AG04449 (cell line): ENCODE measurements at regions of chr1 and their contacts with region 1.

Region 1: GRCh38 chr1:19361611-19362147 is 49.6 kb downstream of the SLC66A1 start:
- DNase-seq: no peak
- H3K4me3 ChIP-seq: no peak overlapping the region
- CTCF ChIP-seq: no peak

Region 2: DNA sequence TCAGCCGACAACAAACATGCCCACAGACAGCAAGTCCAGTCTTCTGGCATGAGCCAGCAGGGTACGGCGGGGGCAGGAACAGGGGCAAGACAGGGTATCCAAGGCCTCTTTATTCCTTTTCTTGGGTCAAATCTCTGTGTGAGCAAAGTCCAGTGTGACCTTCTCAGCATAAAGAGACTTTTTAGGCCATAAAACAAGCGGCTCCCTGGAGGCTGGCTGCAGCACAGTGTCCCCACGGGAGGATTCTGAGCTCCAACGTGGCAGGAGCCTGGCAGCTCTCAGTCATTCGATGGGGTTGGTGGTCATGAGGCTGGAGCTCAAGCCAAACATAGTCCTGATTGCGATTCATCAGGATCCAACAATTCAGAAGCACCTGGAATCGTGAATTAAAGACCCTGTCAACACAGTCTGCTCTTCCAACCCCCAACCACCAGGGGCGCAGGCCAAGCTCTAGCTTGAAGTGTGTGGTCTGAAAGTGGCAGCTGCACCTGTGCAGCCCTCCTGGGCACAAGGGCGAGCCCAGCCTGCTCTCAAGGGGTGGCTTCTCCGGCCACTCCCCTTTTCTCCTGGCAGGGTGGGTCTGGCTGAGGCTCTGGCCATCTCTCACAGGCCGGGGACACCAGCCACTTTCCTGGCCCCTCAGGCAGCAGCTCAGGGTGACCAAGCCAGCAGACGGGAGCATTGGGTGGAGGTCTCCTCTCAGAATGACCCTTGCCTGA is 12.6 kb after region 1 on chr1:
- CTCF ChIA-PET with region 1: interaction called, 22 read pairs
- POLR2A ChIA-PET with region 1: no interaction called
- DNase-seq: no peak
- H3K4me3 ChIP-seq: no peak overlapping the region
- CTCF ChIP-seq: peak; percentile 42

Region 3: GRCh38 chr1:19384772-19385187 is 23.1 kb after region 1 on chr1:
- CTCF ChIA-PET with region 1: no interaction called
- POLR2A ChIA-PET with region 1: no interaction called
- DNase-seq: no peak
- H3K4me3 ChIP-seq: no peak overlapping the region
- CTCF ChIP-seq: no peak